Heart left ventricle (tissue), 16 donors: ENCODE measurements at regions of chr13 and their contacts with region 1.

Region 1: DNA sequence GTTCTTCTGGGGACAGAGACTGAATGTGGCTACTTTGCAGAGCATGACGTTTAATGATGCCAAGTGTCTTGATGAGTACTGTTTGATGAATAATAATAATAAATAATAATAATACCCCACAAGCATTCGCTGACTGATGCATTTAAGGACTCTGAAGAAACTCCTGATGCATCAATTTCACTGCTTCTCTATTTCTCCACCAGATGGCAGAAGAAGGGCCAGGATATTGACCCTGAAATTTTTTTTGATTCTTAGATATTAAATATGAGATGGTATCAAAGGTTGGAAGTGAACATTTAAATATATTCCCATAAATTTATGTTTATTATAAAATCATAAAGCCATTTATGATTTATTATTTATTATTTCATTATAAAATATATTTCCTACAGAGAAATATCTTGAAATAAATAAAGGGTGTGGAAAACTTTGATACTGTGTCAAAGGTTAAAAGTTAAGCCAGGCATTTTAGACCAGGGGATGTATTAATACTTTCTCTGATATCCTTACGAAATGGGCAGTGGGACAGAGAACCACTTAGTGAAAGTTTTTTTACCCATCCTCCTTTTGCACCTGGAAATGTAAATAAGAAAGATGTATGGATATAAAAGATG is 170.9 kb downstream of the LACC1 start:
- DNase-seq: no peak
- ATAC-seq: peak in 1 of 4 donors; percentile 55
- H3K4me3 ChIP-seq: no peak overlapping the region
- H3K27ac ChIP-seq: no peak overlapping the region
- H3K4me1 ChIP-seq: peaks cover 0 to 17% (median 0%) of the 10 kb centered on the region in 12 donors
- H3K27me3 ChIP-seq: peaks cover 0 to 2% (median 0%) of the 10 kb centered on the region in 9 donors
- CTCF ChIP-seq: peak; percentile 74 to 95 (median 85)
- POLR2A ChIP-seq: no peak

Region 2: GRCh38 chr13:43804461-43805070 is 246.0 kb before region 1 on chr13:
- intact Hi-C with region 1: no loop called
- DNase-seq: no peak
- ATAC-seq: peak in 2 of 4 donors; percentile 54 to 64
- H3K4me3 ChIP-seq: no peak overlapping the region
- H3K27ac ChIP-seq: peak overlapping the region in 1 of 12 donors; percentile 26
- H3K4me1 ChIP-seq: peaks cover 0 to 8% (median 0%) of the 10 kb centered on the region in 12 donors
- H3K27me3 ChIP-seq: no peaks in the 10 kb centered on the region
- CTCF ChIP-seq: peak; percentile 44 to 75 (median 62)
- POLR2A ChIP-seq: no peak

Region 3: DNA sequence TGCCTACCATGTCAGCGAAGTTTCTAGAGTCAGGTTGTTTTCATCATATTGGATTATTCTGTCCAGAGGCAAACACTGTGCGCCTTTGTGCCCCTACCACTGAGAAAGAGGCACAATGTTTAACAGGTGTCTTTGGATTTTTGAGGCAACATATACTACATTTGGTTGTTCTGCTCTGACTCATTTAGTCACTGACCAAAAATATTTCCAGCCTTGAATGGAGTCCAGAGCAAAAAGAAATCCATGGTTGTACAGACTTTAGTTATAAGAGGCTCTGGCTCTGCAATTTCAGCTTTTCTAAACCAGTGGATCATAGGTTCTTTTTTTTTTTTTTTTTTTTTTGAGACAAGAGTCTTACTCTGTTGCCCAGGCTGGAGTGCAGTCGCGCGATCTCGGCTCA is 135.1 kb before region 1 on chr13:
- intact Hi-C with region 1: loop called in 1 of 10 experiments (anchors 5 kb)
- DNase-seq: no peak
- ATAC-seq: no peak
- H3K4me3 ChIP-seq: no peak overlapping the region
- H3K27ac ChIP-seq: no peak overlapping the region
- H3K4me1 ChIP-seq: peaks cover 0 to 20% (median 10%) of the 10 kb centered on the region in 12 donors
- H3K27me3 ChIP-seq: peaks cover 0 to 38% (median 0%) of the 10 kb centered on the region in 9 donors
- CTCF ChIP-seq: no peak
- POLR2A ChIP-seq: no peak

Region 4: DNA sequence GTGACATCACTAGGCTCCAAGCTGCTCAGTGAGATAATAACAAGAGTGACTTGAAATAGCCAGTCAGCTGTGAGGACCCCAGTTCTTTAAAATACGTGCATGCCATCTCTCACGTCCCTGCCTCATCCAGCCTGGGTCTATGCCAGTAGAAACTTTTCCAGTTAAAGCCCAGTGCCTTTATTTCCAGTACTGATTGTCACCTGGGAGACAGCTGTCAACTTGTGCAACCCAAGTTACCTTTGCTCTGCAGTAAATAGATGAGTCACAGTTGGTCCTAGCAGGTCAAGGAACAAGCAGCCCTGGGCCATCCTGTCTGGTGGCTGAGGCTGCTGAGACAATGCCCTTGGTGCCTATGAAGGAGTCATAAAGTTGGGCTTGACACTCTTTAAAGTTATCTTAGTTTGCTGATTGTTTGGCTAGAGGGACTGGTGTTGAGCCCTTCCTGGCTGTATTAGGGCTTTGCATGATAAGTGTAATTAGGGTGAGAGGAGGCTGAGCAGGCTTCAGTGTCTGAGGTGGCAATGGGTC is 57.8 kb after region 1 on chr13:
- intact Hi-C with region 1: loop called in 5 of 10 experiments (anchors 5 to 10 kb)
- DNase-seq: peak in 4 of 5 donors; percentile 25 to 85 (median 50)
- ATAC-seq: peak; percentile 76 to 94 (median 84)
- H3K4me3 ChIP-seq: no peak overlapping the region
- H3K27ac ChIP-seq: peak overlapping the region; percentile 18 to 84 (median 75)
- H3K4me1 ChIP-seq: peaks cover 4 to 74% (median 28%) of the 10 kb centered on the region in 12 donors
- H3K27me3 ChIP-seq: no peaks in the 10 kb centered on the region
- CTCF ChIP-seq: no peak
- POLR2A ChIP-seq: no peak

Region 5: DNA sequence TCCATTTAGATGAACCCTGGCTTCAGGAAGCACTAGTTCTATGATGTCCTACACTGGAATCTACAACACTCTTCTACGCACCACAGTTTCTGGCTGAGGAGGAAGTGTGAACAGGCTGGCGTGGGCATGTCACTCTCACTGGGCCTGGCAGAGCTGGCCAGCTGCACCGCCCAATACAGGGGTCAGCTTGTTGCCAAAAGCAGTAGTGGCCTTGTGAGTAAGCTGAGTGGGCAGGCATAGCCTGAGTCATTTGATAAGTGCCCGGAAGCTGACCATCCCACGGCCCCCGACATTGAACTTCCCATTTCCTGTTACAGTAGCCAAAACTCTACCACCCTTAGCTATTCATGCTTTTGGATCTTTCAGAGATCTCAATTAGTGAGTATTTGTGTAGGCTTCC is 82.2 kb after region 1 on chr13:
- intact Hi-C with region 1: loop called in 2 of 10 experiments (anchors 10 kb)
- DNase-seq: peak; percentile 70 to 92 (median 84)
- ATAC-seq: peak; percentile 93 to 96 (median 94)
- H3K4me3 ChIP-seq: no peak overlapping the region
- H3K27ac ChIP-seq: peak overlapping the region in 11 of 12 donors; percentile 10 to 86 (median 57)
- H3K4me1 ChIP-seq: peaks cover 0 to 35% (median 8%) of the 10 kb centered on the region in 12 donors
- H3K27me3 ChIP-seq: no peaks in the 10 kb centered on the region
- CTCF ChIP-seq: no peak
- POLR2A ChIP-seq: no peak

Region 6: DNA sequence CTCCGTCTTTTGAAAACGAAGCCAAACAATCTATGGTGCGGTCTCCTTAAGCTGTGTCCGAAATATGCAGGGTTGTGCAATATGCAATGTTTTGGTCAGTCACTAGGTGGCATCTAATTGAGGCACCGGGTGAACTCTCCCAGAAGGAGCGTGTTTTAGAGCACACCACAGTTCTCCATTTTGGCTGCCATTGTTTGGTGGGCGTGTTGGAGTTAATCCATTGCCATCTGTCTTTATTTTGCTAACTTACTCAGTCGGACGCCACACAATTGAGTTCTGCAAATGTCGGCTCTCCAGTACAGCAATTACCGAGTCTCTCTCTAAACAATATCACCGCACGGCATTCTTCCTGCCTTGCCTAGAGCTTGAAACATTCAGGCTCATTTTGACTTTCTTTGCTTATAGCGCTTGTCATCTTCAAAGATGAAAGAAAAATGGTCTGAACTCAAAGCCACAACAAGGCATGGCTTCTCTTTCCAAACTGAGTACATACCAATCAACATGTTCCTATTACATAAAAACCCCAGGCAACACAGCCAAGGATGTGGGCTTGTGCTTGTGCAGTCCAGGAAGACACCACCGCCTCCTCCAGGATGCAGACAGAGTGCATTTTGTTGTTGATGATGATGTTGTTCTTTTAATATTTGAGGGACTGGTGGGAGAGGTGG is 141.1 kb after region 1 on chr13:
- intact Hi-C with region 1: loop called in 4 of 10 experiments (anchors 5 to 10 kb)
- DNase-seq: peak in 4 of 5 donors; percentile 38 to 62 (median 58)
- ATAC-seq: peak; percentile 89 to 94 (median 94)
- H3K4me3 ChIP-seq: peak overlapping the region in 5 of 12 donors; percentile 9 to 28 (median 10)
- H3K27ac ChIP-seq: peak overlapping the region in 7 of 12 donors; percentile 13 to 62 (median 32)
- H3K4me1 ChIP-seq: peaks cover 0 to 7% (median 0%) of the 10 kb centered on the region in 12 donors
- H3K27me3 ChIP-seq: no peaks in the 10 kb centered on the region
- CTCF ChIP-seq: peak; percentile 57 to 85 (median 75)
- POLR2A ChIP-seq: no peak

Region 7: GRCh38 chr13:44306401-44307192 is 256.0 kb after region 1 on chr13:
- intact Hi-C with region 1: loop called in 1 of 10 experiments (anchors 5 kb)
- DNase-seq: peak; percentile 62 to 86 (median 77)
- ATAC-seq: peak; percentile 34 to 84 (median 61)
- H3K4me3 ChIP-seq: peak overlapping the region in 3 of 12 donors; percentile 3 to 20 (median 16)
- H3K27ac ChIP-seq: peak overlapping the region; percentile 69 to 96 (median 88)
- H3K4me1 ChIP-seq: peaks cover 18 to 81% (median 57%) of the 10 kb centered on the region in 12 donors
- H3K27me3 ChIP-seq: no peaks in the 10 kb centered on the region
- CTCF ChIP-seq: no peak
- POLR2A ChIP-seq: no peak